ENCODE measurements at regions of chr2 and their contacts with region 1.

Region 1: GRCh38 chr2:102615622-102616436 is 3.5 kb upstream of the SLC9A2 start:
- DNase-seq: peak; percentile 7 to 28
- ATAC-seq: peak in 4 of 8 donors; percentile 57 to 81 (median 70)
- H3K4me3 ChIP-seq: no peak overlapping the region
- H3K27ac ChIP-seq: no peak overlapping the region
- H3K4me1 ChIP-seq: peaks cover 0 to 16% (median 12%) of the 10 kb centered on the region in 9 donors
- H3K27me3 ChIP-seq: peaks cover 0 to 84% (median 43%) of the 10 kb centered on the region in 7 donors
- CTCF ChIP-seq: peak; percentile 19 to 86 (median 73)

Region 2: GRCh38 chr2:102514061-102514785 is 101.6 kb before region 1 on chr2:
- intact Hi-C with region 1: loop called in 1 of 10 experiments (anchors 5 kb)
- DNase-seq: no peak
- ATAC-seq: no peak
- H3K4me3 ChIP-seq: no peak overlapping the region
- H3K27ac ChIP-seq: no peak overlapping the region
- H3K4me1 ChIP-seq: peaks cover 0 to 4% (median 0%) of the 10 kb centered on the region in 9 donors
- H3K27me3 ChIP-seq: peaks cover 0 to 7% (median 0%) of the 10 kb centered on the region in 7 donors
- CTCF ChIP-seq: no peak

Region 3: DNA sequence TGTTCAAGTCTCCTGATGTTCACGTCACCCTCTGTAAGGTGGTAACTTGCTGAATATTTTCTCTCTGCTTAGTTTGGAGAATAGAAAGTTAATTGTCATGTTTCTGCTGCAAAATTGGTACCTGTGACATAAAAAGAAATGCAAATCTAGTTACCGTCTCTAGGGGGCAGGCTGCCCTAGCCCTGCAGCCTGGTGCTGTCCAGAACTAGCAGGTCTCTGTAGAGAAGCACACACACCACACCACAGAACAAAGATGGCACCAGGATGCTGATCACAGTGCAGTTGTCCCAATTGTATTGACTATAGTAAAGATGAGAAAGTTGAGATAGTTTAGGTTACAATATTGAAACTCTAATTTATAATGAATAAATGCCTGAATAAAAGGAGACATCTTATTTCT is 95.8 kb before region 1 on chr2:
- intact Hi-C with region 1: loop called in 2 of 10 experiments (anchors 5 kb)
- DNase-seq: no peak
- ATAC-seq: no peak
- H3K4me3 ChIP-seq: no peak overlapping the region
- H3K27ac ChIP-seq: no peak overlapping the region
- H3K4me1 ChIP-seq: no peaks in the 10 kb centered on the region
- H3K27me3 ChIP-seq: peaks cover 0 to 5% (median 0%) of the 10 kb centered on the region in 7 donors
- CTCF ChIP-seq: peak; percentile 31 to 74 (median 52)

Region 4: GRCh38 chr2:102686479-102687439 is 70.9 kb after region 1 on chr2:
- intact Hi-C with region 1: no loop called
- DNase-seq: no peak
- ATAC-seq: no peak
- H3K4me3 ChIP-seq: no peak overlapping the region
- H3K27ac ChIP-seq: no peak overlapping the region
- H3K4me1 ChIP-seq: no peaks in the 10 kb centered on the region
- H3K27me3 ChIP-seq: peaks cover 0 to 13% (median 0%) of the 10 kb centered on the region in 7 donors
- CTCF ChIP-seq: no peak

Region 5: DNA sequence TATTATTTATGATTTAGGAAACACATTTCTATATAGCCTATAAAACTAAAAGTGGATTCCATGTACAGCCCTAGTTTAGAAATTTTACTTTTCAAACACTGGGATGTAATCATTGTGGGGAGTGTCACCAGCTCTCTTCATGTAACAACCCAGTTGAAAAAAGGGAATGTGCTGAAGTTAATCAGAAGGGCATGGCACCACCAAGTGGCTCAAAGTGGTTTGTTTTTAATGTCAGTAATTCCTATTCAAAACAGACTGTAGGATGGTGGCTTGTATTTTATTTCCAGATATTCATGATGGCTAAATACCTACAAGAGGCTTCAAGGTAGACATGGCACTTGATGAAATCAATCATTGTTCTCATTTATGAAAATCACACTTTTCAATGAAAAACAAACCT is 87.9 kb after region 1 on chr2:
- intact Hi-C with region 1: no loop called
- DNase-seq: no peak
- ATAC-seq: peak in 4 of 8 donors; percentile 52 to 69 (median 60)
- H3K4me3 ChIP-seq: no peak overlapping the region
- H3K27ac ChIP-seq: no peak overlapping the region
- H3K4me1 ChIP-seq: no peaks in the 10 kb centered on the region
- H3K27me3 ChIP-seq: peaks cover 0 to 52% (median 30%) of the 10 kb centered on the region in 7 donors
- CTCF ChIP-seq: peak in 7 of 9 donors; percentile 34 to 55 (median 42)

Measured in heart right ventricle (tissue), 16 donors.